ENCODE measurements at regions of chr3 and their contacts with region 1.

Region 1: DNA sequence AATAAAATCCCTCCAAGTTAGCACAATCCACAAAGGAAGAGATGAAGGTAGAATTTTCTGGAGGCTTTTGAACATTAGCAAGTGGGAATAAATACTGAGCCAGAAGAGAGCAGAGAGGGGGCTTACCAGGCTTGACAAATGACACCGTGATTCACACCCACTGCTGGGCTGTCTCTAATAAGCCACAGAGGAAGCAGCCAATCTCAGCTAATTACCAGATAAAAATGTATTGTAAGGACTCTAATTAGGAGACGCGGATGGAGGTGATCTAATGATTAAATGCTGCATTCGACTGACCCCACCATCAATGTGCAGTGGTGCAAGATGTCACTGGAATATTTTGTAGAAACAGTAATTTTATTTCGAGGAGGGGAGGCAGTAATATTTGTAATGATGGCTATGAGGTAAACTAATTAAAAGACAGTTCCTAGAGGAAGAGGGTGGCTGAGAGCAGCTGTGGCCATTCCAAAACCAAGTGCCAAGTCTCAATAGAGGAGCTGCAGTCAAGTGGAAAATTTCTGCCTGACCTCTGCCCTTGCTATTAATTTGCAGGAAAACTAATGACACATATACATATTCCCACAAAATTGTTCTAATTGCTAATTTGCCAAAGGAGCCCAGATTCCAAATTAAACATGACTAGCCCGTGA is 602.2 kb downstream of the FOXP1 start:
- DNase-seq: no peak
- ATAC-seq: no peak
- H3K4me3 Mint-ChIP-seq: no peak overlapping the region
- H3K27ac Mint-ChIP-seq: peak overlapping the region; percentile 55
- H3K4me1 Mint-ChIP-seq: peaks cover 36% of the 10 kb centered on the region
- H3K27me3 Mint-ChIP-seq: no peaks in the 10 kb centered on the region
- CTCF ChIP-seq: no peak

Region 2: DNA sequence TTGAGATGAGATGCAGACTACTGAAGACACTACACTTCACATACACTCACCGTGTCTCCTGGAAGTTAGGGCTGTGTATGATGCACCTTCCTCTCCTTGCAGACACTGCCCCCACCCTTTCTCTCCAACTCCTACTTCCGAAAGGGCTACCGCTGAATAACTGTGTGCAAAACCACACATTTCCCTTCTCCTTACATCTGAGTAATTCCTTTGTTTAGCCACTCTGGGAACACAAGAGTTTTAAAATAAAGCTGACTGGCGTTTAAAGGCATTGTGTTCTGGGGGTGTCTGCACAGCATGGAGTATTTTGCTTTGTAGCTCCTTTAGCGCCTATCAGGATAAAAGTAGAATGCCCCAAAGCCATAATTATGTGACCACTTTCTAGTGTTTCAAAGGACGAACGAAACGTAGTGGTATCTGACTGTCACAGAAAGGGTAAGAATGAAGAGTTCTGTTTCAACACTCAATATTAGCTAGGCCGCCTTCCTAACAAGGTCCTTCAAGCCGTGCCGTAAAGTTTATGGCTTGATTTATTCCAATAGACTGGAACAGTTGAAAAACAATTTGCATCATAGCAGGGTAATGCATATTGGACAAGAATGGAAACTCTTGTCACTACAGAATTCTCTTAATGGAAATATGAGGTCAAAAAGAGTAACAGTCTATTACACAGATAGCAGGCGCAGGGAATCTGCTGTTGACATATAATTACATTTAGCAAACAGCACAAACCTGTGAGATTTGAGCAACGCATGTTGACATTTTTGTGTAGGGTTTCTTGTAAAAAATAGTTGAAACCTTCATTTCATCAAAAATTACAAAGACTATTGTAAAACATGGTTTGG is 17.7 kb before region 1 on chr3:
- CTCF ChIA-PET with region 1: no interaction called
- POLR2A ChIA-PET with region 1: interaction called, 10 read pairs
- DNase-seq: no peak
- ATAC-seq: peak; percentile 58
- H3K4me3 Mint-ChIP-seq: no peak overlapping the region
- H3K27ac Mint-ChIP-seq: peak overlapping the region; percentile 43
- H3K4me1 Mint-ChIP-seq: peaks cover 37% of the 10 kb centered on the region
- H3K27me3 Mint-ChIP-seq: no peaks in the 10 kb centered on the region
- CTCF ChIP-seq: no peak

Measured in WTC11 (cell line).